ENCODE measurements at regions of chr13 and their contacts with region 1.

Region 1: GRCh38 chr13:99258210-99258860 is at the start of gene GPR18:
- DNase-seq: peak; percentile 61
- ATAC-seq: peak; percentile 83
- H3K4me3 Mint-ChIP-seq: peak within 1 kb of the TSS; percentile 86
- H3K27ac Mint-ChIP-seq: peak within 1 kb of the TSS; percentile 94
- H3K4me1 Mint-ChIP-seq: peaks cover 57% of the 10 kb centered on the region
- H3K27me3 Mint-ChIP-seq: no peaks in the 10 kb centered on the region
- total RNA-seq, gene GPR18: 11.1 to 13.1 TPM

Region 2: GRCh38 chr13:99200432-99201167 is 57.7 kb before region 1 on chr13 and contains the start of gene UBAC2:
- CTCF ChIA-PET with region 1: interaction called, 151 read pairs
- DNase-seq: peak; percentile 97
- ATAC-seq: peak; percentile 86
- H3K4me3 Mint-ChIP-seq: peak within 1 kb of the TSS; percentile 91
- H3K27ac Mint-ChIP-seq: peak within 1 kb of the TSS; percentile 92
- H3K4me1 Mint-ChIP-seq: peaks cover 54% of the 10 kb centered on the region
- H3K27me3 Mint-ChIP-seq: no peaks in the 10 kb centered on the region
- total RNA-seq, gene UBAC2: 52.8 to 60.8 TPM

Region 3: GRCh38 chr13:99228737-99229691 is 29.3 kb before region 1 on chr13:
- CTCF ChIA-PET with region 1: interaction called, 21 read pairs
- DNase-seq: no peak
- ATAC-seq: peak; percentile 34
- H3K4me3 Mint-ChIP-seq: peak overlapping the region; percentile 71
- H3K27ac Mint-ChIP-seq: peak overlapping the region; percentile 91
- H3K4me1 Mint-ChIP-seq: peaks cover 74% of the 10 kb centered on the region
- H3K27me3 Mint-ChIP-seq: no peaks in the 10 kb centered on the region

Region 4: GRCh38 chr13:99237981-99238662 is 20.2 kb before region 1 on chr13:
- CTCF ChIA-PET with region 1: interaction called, 21 read pairs
- DNase-seq: no peak
- ATAC-seq: peak; percentile 90
- H3K4me3 Mint-ChIP-seq: peak overlapping the region; percentile 67
- H3K27ac Mint-ChIP-seq: peak overlapping the region; percentile 87
- H3K4me1 Mint-ChIP-seq: peaks cover 43% of the 10 kb centered on the region
- H3K27me3 Mint-ChIP-seq: no peaks in the 10 kb centered on the region

Measured in activated CD8-positive, alpha-beta memory T cell treated with anti-CD3 and anti-CD28 coated beads, Interleukin-2, amount 10 ng/mL, durations not matched to agents 7 days and 5 days (primary cell).